ENCODE measurements at regions of chr7 and their contacts with region 1.

Region 1: DNA sequence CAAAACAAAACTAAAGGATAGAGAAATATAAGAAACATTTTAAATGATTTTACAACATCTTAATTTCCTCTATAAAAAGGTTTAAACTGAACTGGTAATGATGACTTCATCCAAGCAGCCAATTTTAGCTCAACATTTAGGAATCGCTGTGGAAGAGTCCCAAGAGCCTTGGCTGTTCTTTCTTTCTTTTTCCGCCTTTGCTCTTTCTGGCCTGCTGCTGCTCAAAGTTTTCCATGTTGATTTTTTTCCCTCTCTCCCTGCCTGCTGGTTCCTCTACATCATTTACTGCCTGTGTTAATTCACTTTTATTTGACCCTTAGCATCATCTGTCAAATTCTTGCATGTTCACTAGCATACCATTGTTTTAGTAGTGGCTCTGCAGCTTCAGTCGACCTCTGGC is 146.9 kb downstream of the EVX1 start:
- DNase-seq: no peak
- H3K4me3 ChIP-seq: no peak overlapping the region
- H3K27ac ChIP-seq: no peak overlapping the region
- H3K4me1 ChIP-seq: no peaks in the 10 kb centered on the region
- CTCF ChIP-seq: no peak

Region 2: DNA sequence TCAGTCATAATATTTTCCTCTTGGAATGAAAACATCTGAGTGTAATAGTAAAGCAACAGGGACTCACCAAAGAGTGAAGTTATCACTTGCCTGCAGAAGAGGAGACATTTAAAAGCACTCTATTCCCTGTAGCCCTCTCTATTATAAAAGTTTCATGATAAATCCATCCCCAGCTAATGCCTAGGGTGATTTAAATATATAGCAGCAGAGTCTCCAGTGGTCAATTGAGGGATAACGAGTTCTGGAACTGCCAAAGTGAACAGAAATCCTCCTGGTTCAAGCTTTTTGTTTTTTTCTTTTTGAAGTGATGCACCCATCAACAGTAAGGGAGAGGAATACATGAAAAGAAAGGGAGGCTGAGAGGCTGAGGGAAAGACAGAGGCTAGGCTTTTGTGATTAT is 59.6 kb before region 1 on chr7:
- CTCF ChIA-PET with region 1: no interaction called
- POLR2A ChIA-PET with region 1: no interaction called
- intact Hi-C with region 1: no loop called
- DNase-seq: no peak
- H3K4me3 ChIP-seq: no peak overlapping the region
- H3K27ac ChIP-seq: no peak overlapping the region
- H3K4me1 ChIP-seq: no peaks in the 10 kb centered on the region
- CTCF ChIP-seq: no peak

Region 3: DNA sequence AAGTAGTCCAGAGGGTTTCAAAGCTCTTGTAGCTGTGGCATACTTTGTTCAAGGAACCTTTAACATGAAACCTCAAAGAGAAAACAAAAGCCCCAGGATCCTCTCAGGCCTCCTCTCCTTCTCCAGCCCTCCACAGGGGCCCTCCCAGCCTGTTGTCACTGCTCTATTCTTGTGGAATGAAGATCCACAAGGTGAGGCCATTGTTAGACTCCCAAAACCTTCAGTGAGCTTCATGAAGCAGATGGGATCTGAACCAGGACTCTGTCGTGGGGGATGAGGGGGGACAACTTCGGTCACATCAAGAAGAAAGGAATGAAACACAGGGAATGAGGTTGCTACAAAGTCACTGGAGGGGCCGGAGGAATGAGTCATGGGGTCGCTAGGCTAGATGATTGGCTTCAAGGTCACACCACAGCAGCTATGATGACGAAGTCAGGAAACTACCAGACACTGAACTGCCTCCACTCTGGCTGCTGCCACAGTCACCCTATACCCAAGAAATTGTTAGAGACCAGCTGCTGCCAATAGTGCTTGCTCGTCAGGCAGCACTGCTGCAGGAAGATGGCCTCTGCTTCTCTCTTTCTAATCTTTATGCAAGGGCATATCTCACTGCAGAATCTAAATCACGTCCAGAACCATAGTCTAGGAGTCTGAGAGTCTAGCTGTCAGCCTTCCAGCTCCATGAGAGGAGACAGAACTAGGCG is 64.4 kb after region 1 on chr7:
- CTCF ChIA-PET with region 1: no interaction called
- POLR2A ChIA-PET with region 1: interaction called, 10 read pairs
- intact Hi-C with region 1: no loop called
- DNase-seq: no peak
- H3K4me3 ChIP-seq: no peak overlapping the region
- H3K27ac ChIP-seq: no peak overlapping the region
- H3K4me1 ChIP-seq: no peaks in the 10 kb centered on the region
- CTCF ChIP-seq: no peak

Region 4: GRCh38 chr7:27745064-27745583 is 355.6 kb after region 1 on chr7:
- CTCF ChIA-PET with region 1: no interaction called
- POLR2A ChIA-PET with region 1: no interaction called
- intact Hi-C with region 1: no loop called
- DNase-seq: peak; percentile 36
- H3K4me3 ChIP-seq: no peak overlapping the region
- H3K27ac ChIP-seq: no peak overlapping the region
- H3K4me1 ChIP-seq: peaks cover 10% of the 10 kb centered on the region
- CTCF ChIP-seq: peak; percentile 74